Dendritic cell treated with granulocyte-macrophage colony-stimulating factor and Interleukin-4, amounts not matched to agents 40 ng/mL and 50 ng/mL, for 4 days (primary cell): ENCODE measurements at regions of chr13 and their contacts with region 1.

Region 1: GRCh38 chr13:67238277-67238859 is 8.2 kb upstream of the PCDH9 start:
- H3K4me3 Mint-ChIP-seq: no peak overlapping the region
- H3K27ac Mint-ChIP-seq: no peak overlapping the region
- H3K4me1 Mint-ChIP-seq: no peaks in the 10 kb centered on the region
- H3K27me3 Mint-ChIP-seq: peaks cover under 1% of the 10 kb centered on the region

Region 2: GRCh38 chr13:65656740-65657329 is 1581.5 kb before region 1 on chr13:
- intact Hi-C with region 1: loop called (anchors 5 kb)
- H3K4me3 Mint-ChIP-seq: no peak overlapping the region
- H3K27ac Mint-ChIP-seq: no peak overlapping the region
- H3K4me1 Mint-ChIP-seq: no peaks in the 10 kb centered on the region
- H3K27me3 Mint-ChIP-seq: no peaks in the 10 kb centered on the region

Region 3: DNA sequence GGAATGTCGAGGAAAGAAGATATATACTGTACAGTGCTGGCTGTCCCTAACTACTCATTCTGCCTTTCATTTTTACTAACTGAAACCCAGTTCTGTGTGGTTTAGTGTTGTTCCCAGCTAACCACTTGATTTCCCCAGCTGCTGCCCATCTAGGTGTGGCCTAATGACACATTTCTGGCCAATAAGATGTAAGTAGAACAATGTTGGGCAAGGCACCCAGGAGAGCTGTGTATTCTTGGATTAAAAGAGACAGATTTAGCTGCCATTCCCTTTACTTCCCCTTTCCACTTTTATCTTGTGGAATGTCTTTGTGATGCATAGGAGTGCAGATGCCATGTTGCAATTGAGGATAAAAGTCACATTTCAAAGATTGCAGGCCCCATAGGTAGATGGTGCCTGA is 20.1 kb after region 1 on chr13:
- intact Hi-C with region 1: no loop called
- H3K4me3 Mint-ChIP-seq: no peak overlapping the region
- H3K27ac Mint-ChIP-seq: no peak overlapping the region
- H3K4me1 Mint-ChIP-seq: no peaks in the 10 kb centered on the region
- H3K27me3 Mint-ChIP-seq: no peaks in the 10 kb centered on the region